Right ventricle myocardium inferior (tissue), 1 donor: ENCODE measurements at regions of chr7 and their contacts with region 1.

Region 1: GRCh38 chr7:74068393-74069085 is 15.1 kb upstream of the LIMK1 start:
- DNase-seq: peak; percentile 51
- ATAC-seq: no peak

Region 2: DNA sequence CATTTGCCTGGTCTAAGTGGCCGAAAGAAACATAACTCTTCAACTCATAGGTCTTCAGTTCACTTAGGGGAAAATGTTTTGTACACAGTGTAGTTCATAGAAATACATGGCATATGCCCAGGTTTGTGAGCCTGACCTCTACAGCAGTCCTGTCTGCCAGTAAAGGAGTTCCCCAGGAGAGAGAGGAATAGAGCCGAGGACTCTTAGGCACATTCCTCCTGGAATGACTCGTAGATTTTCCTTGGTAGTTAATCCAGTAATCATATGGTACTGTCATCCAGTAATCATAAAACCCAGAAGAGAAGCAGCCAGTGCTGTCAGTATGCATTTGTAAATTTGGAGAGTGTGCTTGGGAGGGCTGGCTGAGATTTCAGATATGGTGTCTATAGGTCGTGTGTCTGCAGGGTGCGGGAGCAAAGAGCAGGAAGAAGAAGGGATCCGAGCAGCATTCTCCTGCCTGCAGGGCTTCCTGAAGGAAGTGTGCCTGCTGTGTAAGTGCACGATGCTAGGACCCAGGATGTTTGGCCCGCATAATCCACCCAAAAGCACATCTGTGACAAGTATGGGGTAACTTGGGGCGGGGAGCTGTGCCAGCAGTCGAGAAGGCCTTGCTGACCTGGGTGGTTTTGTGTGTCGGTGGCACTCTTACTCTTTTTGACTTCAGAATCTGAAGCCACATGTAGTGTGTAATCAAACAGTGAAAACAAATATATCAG is 119.5 kb after region 1 on chr7:
- intact Hi-C with region 1: loop called (anchors 5 kb)
- DNase-seq: no peak
- ATAC-seq: peak; percentile 73

Region 3: GRCh38 chr7:74272305-74273038 is 203.9 kb after region 1 on chr7:
- intact Hi-C with region 1: no loop called
- DNase-seq: peak; percentile 86
- ATAC-seq: peak; percentile 80

Region 4: GRCh38 chr7:74401137-74401859 is 332.8 kb after region 1 on chr7:
- intact Hi-C with region 1: loop called (anchors 2 kb)
- DNase-seq: peak; percentile 76
- ATAC-seq: peak; percentile 53